Calu3 (cell line): ENCODE measurements at regions of chr16 and their contacts with region 1.

Region 1: DNA sequence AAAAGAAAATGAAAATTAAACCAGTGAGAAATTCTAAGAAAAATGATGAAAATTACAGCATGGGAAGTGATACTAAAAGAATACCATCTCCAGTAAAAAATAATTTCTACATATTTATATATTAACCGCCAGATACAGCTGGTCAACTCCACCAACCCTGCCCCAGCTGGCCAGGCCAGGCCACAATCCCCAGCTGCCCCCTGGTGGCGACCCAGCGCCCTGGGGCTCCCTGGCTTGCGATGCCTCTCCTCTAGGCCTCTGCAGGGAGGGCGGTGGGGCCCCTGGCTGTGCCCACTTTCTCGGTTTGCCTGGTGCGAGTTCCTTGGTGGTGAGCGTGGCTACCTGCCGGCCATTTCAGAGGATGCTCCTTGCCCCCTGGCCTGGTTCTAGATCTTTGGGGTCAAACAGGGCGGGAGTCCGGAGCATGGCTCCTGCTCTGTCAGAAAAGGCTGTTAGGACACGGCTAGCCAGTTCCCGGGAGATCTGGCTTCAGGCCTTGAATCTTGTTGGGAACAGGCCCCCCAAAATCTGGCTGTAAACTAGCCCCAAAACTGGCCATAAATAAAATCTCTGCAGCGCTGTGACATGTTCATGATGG is 14.5 kb downstream of the GLIS2 start:
- DNase-seq: peak; percentile 96
- H3K4me3 Mint-ChIP-seq: no peak overlapping the region
- H3K27ac Mint-ChIP-seq: no peak overlapping the region
- H3K4me1 Mint-ChIP-seq: peaks cover 8% of the 10 kb centered on the region
- H3K27me3 Mint-ChIP-seq: no peaks in the 10 kb centered on the region
- CTCF ChIP-seq: peak; percentile 99

Region 2: GRCh38 chr16:3637371-3637923 is 692.9 kb before region 1 on chr16:
- CTCF ChIA-PET with region 1: no interaction called
- intact Hi-C with region 1: no loop called
- DNase-seq: no peak
- H3K4me3 Mint-ChIP-seq: no peak overlapping the region
- H3K27ac Mint-ChIP-seq: no peak overlapping the region
- H3K4me1 Mint-ChIP-seq: peaks cover 5% of the 10 kb centered on the region
- H3K27me3 Mint-ChIP-seq: no peaks in the 10 kb centered on the region
- CTCF ChIP-seq: no peak

Region 3: GRCh38 chr16:3712861-3713372 is 617.5 kb before region 1 on chr16:
- CTCF ChIA-PET with region 1: no interaction called
- intact Hi-C with region 1: no loop called
- DNase-seq: no peak
- H3K4me3 Mint-ChIP-seq: no peak overlapping the region
- H3K27ac Mint-ChIP-seq: peak overlapping the region; percentile 0
- H3K4me1 Mint-ChIP-seq: peaks cover 32% of the 10 kb centered on the region
- H3K27me3 Mint-ChIP-seq: no peaks in the 10 kb centered on the region
- CTCF ChIP-seq: no peak

Region 4: DNA sequence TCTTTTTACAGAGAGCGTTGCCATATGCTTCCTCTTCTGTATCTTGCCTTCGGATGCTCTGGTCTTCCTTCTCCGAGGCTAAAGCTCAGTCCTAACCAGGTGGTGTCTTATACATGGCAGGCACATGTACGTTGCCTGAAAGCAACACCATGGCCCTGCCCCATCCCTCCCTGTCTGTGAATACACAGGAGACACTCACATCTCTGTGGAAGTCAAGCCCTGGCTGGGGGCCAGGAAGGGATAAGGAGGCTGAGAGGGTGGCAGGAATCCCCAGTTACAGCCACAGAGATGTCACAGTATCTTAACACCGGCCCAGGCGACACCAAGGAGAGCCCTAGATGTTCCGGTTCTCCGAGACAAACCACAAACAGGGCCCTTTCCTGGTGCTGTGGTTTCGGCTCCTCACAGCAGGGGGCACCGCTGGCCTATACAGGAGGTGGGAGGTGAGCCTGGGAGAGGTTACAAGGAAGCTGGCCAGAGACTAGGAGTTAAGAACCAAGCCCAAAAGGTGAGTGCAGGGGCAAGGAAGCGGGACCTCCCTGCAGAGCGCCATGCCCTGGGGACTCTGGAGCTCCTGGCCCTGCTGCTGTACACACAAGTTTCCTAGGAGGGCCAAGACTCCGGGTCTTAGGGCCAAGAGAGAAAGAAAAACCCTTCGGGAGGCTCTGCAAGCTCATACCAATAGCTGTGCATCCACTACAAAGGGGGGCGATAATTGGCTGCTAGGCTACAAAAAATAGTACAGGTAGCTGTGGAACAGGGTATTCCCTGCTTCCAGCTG is 130.2 kb before region 1 on chr16:
- CTCF ChIA-PET with region 1: interaction called, 15 read pairs
- intact Hi-C with region 1: loop called (anchors 1 kb)
- DNase-seq: peak; percentile 90
- H3K4me3 Mint-ChIP-seq: peak overlapping the region; percentile 30
- H3K27ac Mint-ChIP-seq: peak overlapping the region; percentile 69
- H3K4me1 Mint-ChIP-seq: peaks cover 12% of the 10 kb centered on the region
- H3K27me3 Mint-ChIP-seq: no peaks in the 10 kb centered on the region
- CTCF ChIP-seq: peak; percentile 85

Region 5: GRCh38 chr16:4271176-4272066 is 59.0 kb before region 1 on chr16:
- CTCF ChIA-PET with region 1: interaction called, 11 read pairs
- intact Hi-C with region 1: no loop called
- DNase-seq: peak; percentile 96
- H3K4me3 Mint-ChIP-seq: peak overlapping the region; percentile 83
- H3K27ac Mint-ChIP-seq: peak overlapping the region; percentile 92
- H3K4me1 Mint-ChIP-seq: no peaks in the 10 kb centered on the region
- H3K27me3 Mint-ChIP-seq: no peaks in the 10 kb centered on the region
- CTCF ChIP-seq: no peak

Region 6: GRCh38 chr16:4288148-4288921 is 42.0 kb before region 1 on chr16:
- CTCF ChIA-PET with region 1: interaction called, 89 read pairs
- intact Hi-C with region 1: loop called (anchors 1 kb)
- DNase-seq: peak; percentile 93
- H3K4me3 Mint-ChIP-seq: no peak overlapping the region
- H3K27ac Mint-ChIP-seq: peak overlapping the region; percentile 30
- H3K4me1 Mint-ChIP-seq: peaks cover 42% of the 10 kb centered on the region
- H3K27me3 Mint-ChIP-seq: no peaks in the 10 kb centered on the region
- CTCF ChIP-seq: peak; percentile 96

Region 7: GRCh38 chr16:4298761-4299522 is 31.4 kb before region 1 on chr16:
- CTCF ChIA-PET with region 1: interaction called, 10 read pairs
- intact Hi-C with region 1: no loop called
- DNase-seq: peak; percentile 97
- H3K4me3 Mint-ChIP-seq: peak overlapping the region; percentile 55
- H3K27ac Mint-ChIP-seq: peak overlapping the region; percentile 89
- H3K4me1 Mint-ChIP-seq: peaks cover 24% of the 10 kb centered on the region
- H3K27me3 Mint-ChIP-seq: no peaks in the 10 kb centered on the region
- CTCF ChIP-seq: no peak

Region 8: GRCh38 chr16:4309836-4310266 is 20.5 kb before region 1 on chr16:
- CTCF ChIA-PET with region 1: interaction called, 17 read pairs
- intact Hi-C with region 1: no loop called
- DNase-seq: peak; percentile 91
- H3K4me3 Mint-ChIP-seq: no peak overlapping the region
- H3K27ac Mint-ChIP-seq: no peak overlapping the region
- H3K4me1 Mint-ChIP-seq: peaks cover 34% of the 10 kb centered on the region
- H3K27me3 Mint-ChIP-seq: no peaks in the 10 kb centered on the region
- CTCF ChIP-seq: peak; percentile 84

Region 9: GRCh38 chr16:4315186-4316109 is 14.9 kb before region 1 on chr16 and contains the start of gene GLIS2:
- CTCF ChIA-PET with region 1: interaction called, 17 read pairs
- intact Hi-C with region 1: no loop called
- DNase-seq: peak; percentile 77
- H3K4me3 Mint-ChIP-seq: peak within 1 kb of the TSS; percentile 64
- H3K27ac Mint-ChIP-seq: peak within 1 kb of the TSS; percentile 63
- H3K4me1 Mint-ChIP-seq: peaks cover 26% of the 10 kb centered on the region
- H3K27me3 Mint-ChIP-seq: no peaks in the 10 kb centered on the region
- CTCF ChIP-seq: no peak
- total RNA-seq, gene GLIS2: 22.1 and 24.5 TPM in 2 replicates